ENCODE measurements at regions of chr19 and their contacts with region 1.

Region 1: DNA sequence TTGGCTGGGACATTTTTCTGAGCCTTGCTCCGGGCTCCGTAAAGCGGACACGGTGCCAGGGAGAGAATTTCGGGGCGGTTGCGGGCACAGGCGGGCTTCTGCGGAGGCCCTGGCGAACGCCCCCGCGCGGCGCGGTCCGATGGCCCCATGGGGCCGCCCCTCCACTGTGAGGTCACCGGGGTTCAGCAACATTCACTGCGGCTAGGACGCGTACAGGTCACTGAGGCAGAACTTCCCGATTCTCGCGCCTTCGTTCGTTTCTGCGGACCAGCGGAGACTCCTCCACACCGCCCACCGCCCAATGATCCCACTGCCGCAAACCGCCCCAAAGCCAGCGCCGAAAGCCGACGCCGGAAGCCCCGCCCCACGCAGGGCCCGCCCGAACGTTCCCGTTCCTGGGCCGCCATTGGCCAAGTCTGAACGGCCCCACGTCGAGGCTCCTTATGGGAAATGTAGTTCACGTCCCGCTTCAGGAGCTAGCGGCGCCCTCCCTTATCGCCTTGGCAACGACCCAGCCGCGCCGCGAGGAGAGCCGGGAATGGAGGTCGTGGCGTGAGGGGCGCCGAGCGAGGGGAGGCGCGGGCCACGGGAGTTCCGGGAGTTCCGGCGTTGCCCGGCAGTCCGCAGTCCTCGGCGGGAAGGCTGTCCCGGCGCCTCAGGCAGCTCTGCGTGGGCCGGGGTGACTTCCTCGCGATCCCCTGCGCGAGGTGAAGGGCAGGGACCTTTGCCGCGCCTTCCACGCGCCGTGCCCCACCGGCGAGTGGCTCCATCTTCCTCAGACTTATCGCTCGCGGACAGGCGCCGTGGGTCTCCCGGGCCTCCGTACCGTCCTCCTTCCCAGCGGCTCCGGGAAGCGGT is at the start of gene ZNF584:
- DNase-seq: peak; percentile 92 to 94
- ATAC-seq: peak; percentile 99
- H3K4me3 ChIP-seq: peak within 1 kb of the TSS; percentile 58 to 91 (median 84)
- H3K27ac ChIP-seq: peak within 1 kb of the TSS; percentile 86 to 93 (median 88)
- H3K4me1 ChIP-seq: peaks cover 21 to 23% of the 10 kb centered on the region in 2 donors
- H3K27me3 ChIP-seq: no peaks in the 10 kb centered on the region
- CTCF ChIP-seq: peak in 1 of 5 experiments; percentile 5
- POLR2A ChIP-seq: peak; percentile 83 to 89
- total RNA-seq, gene ZNF584: 8.5 to 21.4 (median 10.2) TPM

Region 2: GRCh38 chr19:58380722-58381466 is 27.5 kb before region 1 on chr19 and contains the start of gene ZNF837:
- in situ Hi-C with region 1: no loop called
- intact Hi-C with region 1: no loop called
- DNase-seq: peak; percentile 97 to 100
- ATAC-seq: peak; percentile 96 to 97
- H3K4me3 ChIP-seq: peak within 1 kb of the TSS; percentile 70 to 95 (median 81)
- H3K27ac ChIP-seq: peak within 1 kb of the TSS; percentile 78 to 99 (median 94)
- H3K4me1 ChIP-seq: peaks cover 30 to 36% of the 10 kb centered on the region in 2 donors
- H3K27me3 ChIP-seq: no peaks in the 10 kb centered on the region
- CTCF ChIP-seq: peak in 1 of 5 experiments; percentile 19
- POLR2A ChIP-seq: peak; percentile 82 to 84
- total RNA-seq, gene ZNF837: 0.11 to 0.36 TPM in 2 of 4 donors, not detected in the others

Region 3: DNA sequence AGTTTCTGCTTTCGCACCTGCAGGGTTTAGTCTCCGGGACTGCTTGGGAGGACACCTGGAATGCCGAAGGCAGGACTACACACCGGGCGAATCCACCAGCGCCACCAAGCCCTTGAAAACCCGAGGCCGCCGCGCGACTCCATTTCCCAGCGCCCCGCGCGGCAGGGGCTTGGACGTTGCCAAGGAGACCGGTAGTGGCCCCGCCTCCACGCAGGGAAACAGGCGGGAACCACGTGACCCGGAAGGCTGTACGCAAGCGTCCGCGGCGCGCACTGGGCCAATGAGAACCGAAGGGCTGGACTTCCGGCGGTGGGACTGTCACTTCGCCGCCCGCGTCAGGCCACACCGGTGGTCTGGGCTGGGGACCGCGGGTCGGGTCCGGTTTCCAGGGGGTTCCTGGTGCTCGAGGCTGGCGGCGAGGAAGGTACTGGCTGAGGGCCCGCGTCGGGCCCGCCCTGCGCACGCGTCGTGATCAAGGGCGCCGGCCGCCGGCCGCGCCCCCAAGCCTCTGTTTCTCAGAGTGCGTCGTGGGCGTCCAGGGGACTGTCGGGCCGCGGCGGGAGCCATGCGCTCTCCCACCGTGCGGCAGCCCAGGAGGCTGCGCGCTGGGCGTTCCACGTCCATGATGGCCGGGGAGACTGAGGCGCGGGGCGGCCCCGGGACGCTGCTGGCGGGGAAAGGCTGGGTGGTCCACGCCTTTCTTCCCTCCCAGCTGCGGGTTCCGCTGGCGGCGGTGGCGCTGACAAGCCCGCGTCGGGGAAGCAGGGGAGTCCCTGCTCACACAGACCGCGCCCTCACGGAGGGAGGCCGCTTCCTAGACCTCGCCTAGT is 58.6 kb after region 1 on chr19 and contains the start of gene ZNF324:
- in situ Hi-C with region 1: no loop called
- intact Hi-C with region 1: loop called (anchors 2 kb)
- DNase-seq: peak; percentile 97
- ATAC-seq: peak; percentile 99
- H3K4me3 ChIP-seq: peak within 1 kb of the TSS; percentile 87 to 100 (median 99)
- H3K27ac ChIP-seq: peak within 1 kb of the TSS; percentile 68 to 92 (median 88)
- H3K4me1 ChIP-seq: peaks cover 10 to 13% of the 10 kb centered on the region in 2 donors
- H3K27me3 ChIP-seq: no peaks in the 10 kb centered on the region
- CTCF ChIP-seq: no peak
- POLR2A ChIP-seq: peak; percentile 63 to 71
- total RNA-seq, gene ZNF324: 8.1 to 11.4 (median 11.3) TPM

Region 4: GRCh38 chr19:58572818-58573657 is 164.7 kb after region 1 on chr19 and contains the start of gene MZF1:
- in situ Hi-C with region 1: no loop called
- intact Hi-C with region 1: loop called (anchors 1 kb)
- DNase-seq: peak; percentile 100
- ATAC-seq: peak; percentile 82 to 84
- H3K4me3 ChIP-seq: peak within 1 kb of the TSS; percentile 70 to 85 (median 76)
- H3K27ac ChIP-seq: peak within 1 kb of the TSS; percentile 95 to 99 (median 98)
- H3K4me1 ChIP-seq: peaks cover 18 to 24% of the 10 kb centered on the region in 2 donors
- H3K27me3 ChIP-seq: no peaks in the 10 kb centered on the region
- CTCF ChIP-seq: peak in 4 of 5 experiments; percentile 8 to 41 (median 26)
- POLR2A ChIP-seq: peak; percentile 37 to 40
- total RNA-seq, gene MZF1: 6.8 to 21.5 (median 15.1) TPM

Measured in gastrocnemius medialis (tissue), 4 donors.